BJ (cell line): ENCODE measurements at regions of chr15 and their contacts with region 1.

Region 1: GRCh38 chr15:66851226-66852071 is 149.4 kb downstream of the SMAD6 start:
- DNase-seq: peak; percentile 69
- H3K4me3 ChIP-seq: no peak overlapping the region
- H3K27me3 ChIP-seq: no peaks in the 10 kb centered on the region
- CTCF ChIP-seq: peak; percentile 98

Region 2: DNA sequence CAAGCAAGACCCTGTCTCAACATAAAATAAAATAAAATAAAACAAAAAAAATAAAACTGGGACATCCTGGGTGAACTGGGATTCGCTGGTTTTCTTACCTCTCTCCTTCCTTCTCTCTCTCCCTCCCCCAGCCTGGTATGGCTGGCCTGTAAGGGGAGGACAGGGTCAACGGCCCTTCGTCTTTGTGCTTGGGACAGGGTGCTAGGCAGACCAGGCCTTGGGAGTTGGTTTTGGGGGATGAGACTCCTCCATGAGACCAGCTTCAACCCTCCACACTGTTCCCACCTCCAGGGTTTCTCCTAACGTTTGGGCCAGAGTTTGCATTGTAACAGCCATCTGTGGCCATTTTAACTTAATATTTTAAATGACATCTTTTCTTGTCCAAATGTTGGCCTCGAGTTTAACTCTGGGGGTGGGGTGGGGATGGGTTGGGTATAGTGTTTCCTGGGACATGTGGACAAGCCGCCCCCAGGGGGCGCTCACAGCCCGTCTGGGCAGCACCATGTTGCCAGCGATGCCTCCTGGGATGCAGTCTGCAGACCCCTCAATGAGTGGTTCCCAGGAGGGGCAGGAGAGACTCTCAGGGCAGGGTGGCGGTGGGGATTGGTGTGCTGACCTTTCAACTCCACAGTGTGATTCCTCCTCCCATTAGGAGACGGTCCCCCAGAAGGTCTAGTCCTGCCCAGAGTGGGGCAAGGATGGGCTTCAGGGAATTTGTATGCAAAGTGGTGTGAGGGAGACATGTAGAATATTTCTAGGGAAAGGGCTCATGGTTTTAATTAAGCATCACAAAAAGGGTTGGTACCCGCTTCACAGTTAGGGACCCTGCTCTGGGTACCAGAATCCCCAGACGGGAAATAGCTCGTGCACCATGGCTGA is 247.9 kb before region 1 on chr15:
- CTCF ChIA-PET with region 1: interaction called, 60 read pairs
- POLR2A ChIA-PET with region 1: no interaction called
- DNase-seq: no peak
- H3K4me3 ChIP-seq: no peak overlapping the region
- H3K27me3 ChIP-seq: peaks cover 13% of the 10 kb centered on the region; the same call in 1 of the 2 replicates
- CTCF ChIP-seq: peak; percentile 93

Region 3: GRCh38 chr15:66619151-66619903 is 232.1 kb before region 1 on chr15:
- CTCF ChIA-PET with region 1: interaction called, 42 read pairs
- POLR2A ChIA-PET with region 1: interaction called, 4 read pairs
- DNase-seq: no peak
- H3K4me3 ChIP-seq: no peak overlapping the region
- H3K27me3 ChIP-seq: no peaks in the 10 kb centered on the region
- CTCF ChIP-seq: peak; percentile 94

Region 4: GRCh38 chr15:66714543-66714981 is 136.9 kb before region 1 on chr15:
- CTCF ChIA-PET with region 1: interaction called, 19 read pairs
- POLR2A ChIA-PET with region 1: no interaction called
- DNase-seq: no peak
- H3K4me3 ChIP-seq: no peak overlapping the region
- H3K27me3 ChIP-seq: no peaks in the 10 kb centered on the region
- CTCF ChIP-seq: no peak

Region 5: GRCh38 chr15:66747886-66748707 is 103.4 kb before region 1 on chr15:
- CTCF ChIA-PET with region 1: interaction called, 12 read pairs
- POLR2A ChIA-PET with region 1: no interaction called
- DNase-seq: peak; percentile 93
- H3K4me3 ChIP-seq: no peak overlapping the region
- H3K27me3 ChIP-seq: no peaks in the 10 kb centered on the region
- CTCF ChIP-seq: no peak

Region 6: GRCh38 chr15:66780172-66780972 is 71.1 kb before region 1 on chr15:
- CTCF ChIA-PET with region 1: interaction called, 105 read pairs
- POLR2A ChIA-PET with region 1: no interaction called
- DNase-seq: no peak
- H3K4me3 ChIP-seq: no peak overlapping the region
- H3K27me3 ChIP-seq: no peaks in the 10 kb centered on the region
- CTCF ChIP-seq: no peak

Region 7: DNA sequence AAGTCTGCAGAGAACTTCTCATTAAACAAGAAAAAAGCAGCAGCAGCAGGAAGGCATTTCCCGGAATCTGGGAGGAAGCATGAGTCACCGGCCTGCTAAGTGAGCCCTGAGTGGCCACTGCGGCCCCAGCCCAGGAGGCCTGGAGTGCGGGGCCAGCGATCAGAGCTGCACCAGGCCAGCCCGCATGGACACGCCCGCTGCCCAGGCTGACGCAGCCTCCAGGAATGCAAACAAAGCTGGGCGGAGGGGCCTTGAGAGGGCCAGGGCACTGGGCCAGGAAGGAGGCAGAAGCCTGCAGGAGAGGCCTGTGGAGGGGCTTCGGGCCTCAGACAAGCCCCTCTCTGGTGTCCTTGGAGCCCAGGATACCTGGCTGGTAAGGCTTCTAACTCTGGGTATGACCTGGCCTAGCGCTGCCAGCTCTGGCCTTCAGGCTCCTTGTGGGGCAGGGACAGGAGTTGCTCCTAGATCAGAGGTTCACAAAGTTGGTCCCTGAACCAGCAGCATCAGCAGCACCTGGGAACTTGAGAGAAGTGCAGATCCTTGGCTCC is 48.2 kb before region 1 on chr15:
- CTCF ChIA-PET with region 1: interaction called, 13 read pairs
- POLR2A ChIA-PET with region 1: no interaction called
- DNase-seq: peak; percentile 91
- H3K4me3 ChIP-seq: no peak overlapping the region
- H3K27me3 ChIP-seq: no peaks in the 10 kb centered on the region
- CTCF ChIP-seq: no peak